Posterior vena cava (tissue), 2 donors: ENCODE measurements at regions of chr3 and their contacts with region 1.

Region 1: GRCh38 chr3:5767304-5767703 is 579.8 kb downstream of the EDEM1 start:
- DNase-seq: no peak

Region 2: GRCh38 chr3:3825035-3825434 is 1942.3 kb before region 1 on chr3:
- intact Hi-C with region 1: loop called in 1 of 2 experiments (anchors 5 kb)
- DNase-seq: no peak